HEK293T (cell line): ENCODE measurements at regions of chrX and their contacts with region 1.

Region 1: DNA sequence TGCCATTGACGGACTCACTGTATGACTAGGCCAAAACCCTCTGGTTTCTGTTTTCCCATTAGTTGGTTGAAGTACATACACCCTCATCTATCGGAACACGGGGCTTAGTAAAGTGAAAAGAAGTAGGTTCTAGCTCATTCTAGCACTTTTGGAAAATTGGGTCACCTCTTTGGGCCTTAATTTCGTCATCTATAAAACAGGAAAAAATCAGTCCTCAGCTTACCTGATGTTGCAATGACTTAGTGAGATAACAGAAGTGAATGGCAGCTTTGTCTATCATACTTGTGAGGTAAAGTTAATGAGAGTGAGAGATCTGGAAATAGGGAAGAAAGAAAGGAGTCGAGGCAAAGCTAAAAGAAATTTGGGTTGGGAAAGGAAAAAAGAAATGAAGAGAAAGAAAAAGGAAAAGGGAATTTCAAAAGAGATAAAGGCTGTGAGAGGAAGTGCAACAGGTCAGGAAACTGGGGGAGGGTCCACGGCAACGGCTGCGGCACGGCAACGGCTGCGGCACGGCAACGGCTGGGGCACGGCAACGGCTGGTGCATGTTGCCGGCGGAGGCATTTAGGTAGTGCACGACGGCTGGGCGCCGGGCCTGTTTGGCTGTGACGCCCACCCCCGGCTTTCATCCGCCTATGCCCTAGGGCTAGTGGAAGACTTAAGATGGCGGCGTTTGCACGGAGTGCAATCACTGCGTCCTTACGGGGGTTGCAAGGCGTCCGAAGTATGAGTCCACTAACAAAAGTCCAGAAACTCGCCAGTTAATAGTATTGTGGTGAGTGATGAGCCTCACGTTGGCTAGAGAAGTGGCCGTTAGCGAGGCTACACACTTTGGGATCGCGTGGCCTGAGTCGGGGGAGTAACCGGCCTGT is 360.1 kb upstream of the ZCCHC13 start:
- DNase-seq: peak; percentile 93

Region 2: GRCh38 chrX:73916931-73917667 is 26.8 kb before region 1 on chrX:
- CTCF ChIA-PET with region 1: interaction called, 4 read pairs
- POLR2A ChIA-PET with region 1: interaction called, 11 read pairs
- DNase-seq: peak; percentile 36